ENCODE measurements at regions of chr2 and their contacts with region 1.

Region 1: GRCh38 chr2:85470850-85471800 is 52.6 kb downstream of the SH2D6 start:
- DNase-seq: no peak
- ATAC-seq: peak; percentile 57
- H3K4me3 Mint-ChIP-seq: no peak overlapping the region
- H3K27ac Mint-ChIP-seq: no peak overlapping the region
- H3K4me1 Mint-ChIP-seq: peaks cover 9% of the 10 kb centered on the region
- H3K27me3 Mint-ChIP-seq: no peaks in the 10 kb centered on the region
- CTCF ChIP-seq: no peak

Region 2: GRCh38 chr2:85511008-85511811 is 40.1 kb after region 1 on chr2:
- CTCF ChIA-PET with region 1: no interaction called
- POLR2A ChIA-PET with region 1: no interaction called
- intact Hi-C with region 1: loop called (anchors 5 kb)
- DNase-seq: no peak
- ATAC-seq: no peak
- H3K4me3 Mint-ChIP-seq: no peak overlapping the region
- H3K27ac Mint-ChIP-seq: no peak overlapping the region
- H3K4me1 Mint-ChIP-seq: no peaks in the 10 kb centered on the region
- H3K27me3 Mint-ChIP-seq: peaks cover 2% of the 10 kb centered on the region
- CTCF ChIP-seq: no peak

Region 3: DNA sequence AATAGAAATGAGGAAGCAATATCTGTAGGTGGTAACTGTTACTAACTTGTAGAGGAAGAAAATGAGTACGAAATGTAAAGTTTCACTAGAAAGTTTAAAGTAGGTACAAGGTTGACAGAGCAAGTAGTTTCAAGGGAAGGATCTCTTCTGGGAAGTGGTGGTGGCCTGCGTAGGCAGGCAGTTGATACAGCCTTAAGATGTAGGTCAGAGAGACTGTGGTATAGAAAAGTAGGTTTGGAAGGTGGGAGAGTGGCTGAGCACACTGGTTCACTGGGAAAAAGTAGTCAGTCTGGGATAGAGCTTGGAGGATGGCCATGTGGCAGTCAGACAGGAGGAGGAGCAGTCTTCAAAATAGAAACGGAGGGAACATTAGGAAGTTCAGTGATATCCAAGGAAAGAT is 993.5 kb after region 1 on chr2:
- CTCF ChIA-PET with region 1: no interaction called
- POLR2A ChIA-PET with region 1: no interaction called
- intact Hi-C with region 1: no loop called
- DNase-seq: no peak
- ATAC-seq: no peak
- H3K4me3 Mint-ChIP-seq: no peak overlapping the region
- H3K27ac Mint-ChIP-seq: no peak overlapping the region
- H3K4me1 Mint-ChIP-seq: peaks cover 2% of the 10 kb centered on the region
- H3K27me3 Mint-ChIP-seq: no peaks in the 10 kb centered on the region
- CTCF ChIP-seq: no peak